ENCODE measurements at regions of chr16 and their contacts with region 1.

Region 1: DNA sequence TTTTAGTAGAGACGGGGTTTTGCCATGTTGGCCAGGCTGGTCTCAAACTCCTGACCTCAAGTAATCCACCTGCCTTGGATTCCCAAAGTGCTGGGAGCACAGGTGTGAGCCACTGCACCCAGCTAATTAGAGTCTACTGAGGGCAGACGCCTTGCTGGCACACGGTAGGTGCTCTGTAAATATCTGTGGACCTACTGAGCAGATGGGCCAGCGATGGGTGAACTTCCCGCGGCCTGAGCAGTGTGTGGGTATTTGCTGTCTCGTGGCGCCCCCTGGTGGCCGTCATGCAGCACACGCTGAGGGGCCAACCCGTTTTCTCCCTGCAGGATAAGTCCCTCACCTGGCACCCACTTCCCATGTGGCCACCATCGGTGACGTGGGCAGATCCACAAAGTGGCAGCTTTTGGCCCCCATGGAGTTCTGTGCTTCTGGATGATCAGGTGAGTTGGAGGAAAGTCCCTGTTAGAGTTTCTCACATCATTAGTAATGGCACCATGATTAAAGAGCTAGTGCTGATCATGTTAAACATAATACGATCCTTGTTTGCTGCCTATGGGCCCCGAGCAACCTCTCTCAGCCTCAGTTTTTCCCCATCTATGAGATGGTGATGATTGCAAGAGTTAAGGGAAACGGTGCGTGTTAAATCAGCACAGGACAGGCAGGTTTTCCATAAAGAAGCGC is 40.7 kb downstream of the ZDHHC7 start:
- DNase-seq: peak; percentile 87
- ATAC-seq: peak; percentile 83

Region 2: GRCh38 chr16:84672276-84673202 is 298.0 kb before region 1 on chr16:
- intact Hi-C with region 1: loop called (anchors 10 kb)
- DNase-seq: peak; percentile 90
- ATAC-seq: peak; percentile 89

Region 3: GRCh38 chr16:84754353-84754856 is 216.2 kb before region 1 on chr16:
- intact Hi-C with region 1: loop called (anchors 5 kb)
- DNase-seq: no peak
- ATAC-seq: peak; percentile 85

Region 4: DNA sequence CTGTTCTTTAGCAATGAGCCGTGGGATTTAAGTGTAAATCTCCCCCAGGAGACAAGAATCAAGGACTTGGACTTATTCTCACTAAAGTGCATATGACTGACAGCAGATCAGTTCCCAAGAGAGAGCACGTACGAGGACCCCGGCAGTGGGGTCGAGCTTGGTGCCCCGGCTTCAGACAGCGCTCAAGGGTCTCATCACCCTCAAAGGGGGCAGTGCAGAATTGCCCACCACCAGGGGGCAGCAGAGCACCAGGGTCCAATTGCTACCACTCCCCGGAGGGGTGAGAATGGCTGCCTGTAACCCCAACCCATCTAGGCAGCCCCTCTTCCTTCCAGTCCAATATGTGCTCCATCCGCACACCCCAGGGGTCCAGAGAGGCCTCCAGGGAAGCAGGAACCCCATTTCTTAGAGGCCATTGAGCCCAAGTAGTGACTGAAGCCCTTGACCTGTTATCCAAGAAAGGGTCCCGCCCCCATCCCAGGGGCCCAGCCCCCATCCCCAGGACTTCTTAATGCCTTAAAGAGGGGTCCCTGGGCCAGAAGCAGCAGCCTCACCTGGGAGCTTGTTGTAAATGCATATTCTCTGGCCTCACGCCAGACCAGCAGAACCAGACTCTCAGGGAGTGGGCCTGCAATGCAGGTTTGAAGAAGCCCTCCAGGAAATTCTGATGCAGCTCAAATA is 45.4 kb before region 1 on chr16:
- intact Hi-C with region 1: loop called (anchors 5 kb)
- DNase-seq: peak; percentile 76
- ATAC-seq: no peak

Measured in Right ventricle myocardium superior (tissue), 1 donor.